HCT116 (cell line): ENCODE measurements at regions of chr2 and their contacts with region 1.

Region 1: GRCh38 chr2:240452457-240453256 is 17.2 kb downstream of the GPC1 start:
- DNase-seq: no peak
- ATAC-seq: peak; percentile 84
- H3K4me3 ChIP-seq: peak overlapping the region; percentile 28 to 49
- H3K27ac ChIP-seq: peak overlapping the region; percentile 55; the same call in 1 of the 2 replicates
- H3K4me1 ChIP-seq: peaks cover 27 to 51% of the 10 kb centered on the region in 2 experiments
- H3K27me3 ChIP-seq: no peaks in the 10 kb centered on the region
- CTCF ChIP-seq: no peak
- POLR2A ChIP-seq: no peak
- RAD21 ChIP-seq: no peak

Region 2: GRCh38 chr2:240149943-240150784 is 302.5 kb before region 1 on chr2:
- CTCF ChIA-PET with region 1: no interaction called
- POLR2A ChIA-PET with region 1: no interaction called
- RAD21 ChIA-PET with region 1: no interaction called
- intact Hi-C with region 1: loop called (anchors 5 kb)
- DNase-seq: peak; percentile 33
- ATAC-seq: peak; percentile 92
- H3K4me3 ChIP-seq: no peak overlapping the region
- H3K27ac ChIP-seq: no peak overlapping the region
- H3K4me1 ChIP-seq: no peaks in the 10 kb centered on the region
- H3K27me3 ChIP-seq: 0 out of 2 replicates have a peak, but pooled peaks cover 6% of the 10 kb centered on the region
- CTCF ChIP-seq: peak; percentile 51 to 90 (median 86); a peak in 5 of 6 replicates
- POLR2A ChIP-seq: no peak
- RAD21 ChIP-seq: peak; percentile 84